ENCODE measurements at regions of chr19 and their contacts with region 1.

Region 1: GRCh38 chr19:1651568-1652291 is 685 bp downstream of the TCF3 start:
- DNase-seq: peak in 1 of 2 donors; percentile 28
- H3K4me3 ChIP-seq: peak overlapping the region; percentile 94 to 96
- H3K27ac ChIP-seq: peak overlapping the region; percentile 76 to 80
- H3K4me1 ChIP-seq: peaks cover 0 to 52% (median 34%) of the 10 kb centered on the region in 4 donors
- H3K27me3 ChIP-seq: peaks cover 0 to 7% of the 10 kb centered on the region in 2 donors
- CTCF ChIP-seq: peak in 1 of 2 experiments; percentile 6

Region 2: DNA sequence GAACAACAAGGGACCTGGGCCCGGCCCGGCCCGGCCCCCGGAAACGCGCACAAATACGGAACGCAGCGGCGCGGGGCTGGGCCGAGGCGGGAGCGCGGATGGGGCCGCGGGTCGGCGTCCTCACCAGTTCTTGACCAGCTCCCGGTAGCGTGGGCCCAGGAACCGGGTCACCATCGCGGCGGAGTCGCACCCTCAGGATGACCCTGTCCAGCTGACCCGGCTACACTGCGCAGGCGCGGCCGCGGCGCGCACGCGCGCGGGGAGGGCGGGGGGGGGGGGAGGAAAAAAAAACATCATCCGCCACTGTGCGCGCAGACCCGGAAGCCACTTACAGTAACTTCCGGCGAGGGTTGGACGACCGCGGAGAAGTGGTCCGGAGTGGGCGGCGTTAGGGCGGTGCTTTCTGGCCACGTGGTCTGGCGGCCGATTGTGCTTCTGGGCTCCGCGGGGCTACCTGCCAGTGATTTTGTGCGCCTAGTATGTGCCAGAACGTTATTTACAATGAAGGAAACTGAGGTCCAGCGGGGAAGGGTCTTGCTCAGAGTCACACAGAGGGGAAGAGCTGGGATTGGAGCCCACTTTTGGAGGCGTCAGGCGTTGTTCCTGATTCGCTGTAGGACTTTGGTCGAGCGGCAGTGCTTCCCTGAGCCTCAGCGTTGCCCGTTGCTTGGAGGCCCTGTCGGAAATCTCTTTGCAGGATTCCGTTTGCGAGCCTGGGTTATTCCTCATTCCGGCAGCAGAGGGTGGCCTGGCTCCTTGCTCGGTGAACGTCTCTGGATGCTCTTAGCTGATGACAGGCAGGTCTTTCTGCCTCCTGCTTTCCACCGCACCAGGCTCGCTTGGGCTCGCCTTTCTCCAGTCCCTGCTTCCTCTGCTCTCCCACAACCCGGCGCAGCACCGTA is 46.2 kb before region 1 on chr19 and contains the start of gene UQCR11:
- intact Hi-C with region 1: loop called (anchors 2 kb)
- DNase-seq: peak; percentile 95 to 97
- H3K4me3 ChIP-seq: peak within 1 kb of the TSS; percentile 80 to 99
- H3K27ac ChIP-seq: peak within 1 kb of the TSS; percentile 84 to 94
- H3K4me1 ChIP-seq: peaks cover 0 to 39% (median 31%) of the 10 kb centered on the region in 4 donors
- H3K27me3 ChIP-seq: no peaks in the 10 kb centered on the region
- CTCF ChIP-seq: peak; percentile 56 to 76